Activated naive CD4-positive, alpha-beta T cell treated with anti-CD3 and anti-CD28 coated beads for 36 hours (primary cell): ENCODE measurements at regions of chr4 and their contacts with region 1.

Region 1: GRCh38 chr4:44487341-44487740 is 38.7 kb upstream of the KCTD8 start:
- DNase-seq: no peak
- H3K4me3 Mint-ChIP-seq: no peak overlapping the region
- H3K27ac Mint-ChIP-seq: no peak overlapping the region
- H3K4me1 Mint-ChIP-seq: no peaks in the 10 kb centered on the region
- H3K27me3 Mint-ChIP-seq: no peaks in the 10 kb centered on the region

Region 2: GRCh38 chr4:44448548-44449461 is 38.5 kb before region 1 on chr4 and contains the start of gene KCTD8:
- CTCF ChIA-PET with region 1: interaction called, 4 read pairs
- intact Hi-C with region 1: loop called (anchors 1 kb)
- DNase-seq: peak; percentile 74
- H3K4me3 Mint-ChIP-seq: peak within 1 kb of the TSS; percentile 62
- H3K27ac Mint-ChIP-seq: no peak within 1 kb of the TSS
- H3K4me1 Mint-ChIP-seq: peaks cover 17% of the 10 kb centered on the region
- H3K27me3 Mint-ChIP-seq: peaks cover 54% of the 10 kb centered on the region
- total RNA-seq, gene KCTD8: not detected

Region 3: GRCh38 chr4:44678094-44679041 is 191.0 kb after region 1 on chr4 and contains the start of gene GUF1:
- CTCF ChIA-PET with region 1: no interaction called
- intact Hi-C with region 1: no loop called
- DNase-seq: peak; percentile 90
- H3K4me3 Mint-ChIP-seq: peak within 1 kb of the TSS; percentile 95
- H3K27ac Mint-ChIP-seq: peak within 1 kb of the TSS; percentile 94
- H3K4me1 Mint-ChIP-seq: peaks cover 35% of the 10 kb centered on the region
- H3K27me3 Mint-ChIP-seq: no peaks in the 10 kb centered on the region
- total RNA-seq, gene GUF1: 32.6 to 32.9 TPM